ENCODE measurements at regions of chr5 and their contacts with region 1.

Region 1: DNA sequence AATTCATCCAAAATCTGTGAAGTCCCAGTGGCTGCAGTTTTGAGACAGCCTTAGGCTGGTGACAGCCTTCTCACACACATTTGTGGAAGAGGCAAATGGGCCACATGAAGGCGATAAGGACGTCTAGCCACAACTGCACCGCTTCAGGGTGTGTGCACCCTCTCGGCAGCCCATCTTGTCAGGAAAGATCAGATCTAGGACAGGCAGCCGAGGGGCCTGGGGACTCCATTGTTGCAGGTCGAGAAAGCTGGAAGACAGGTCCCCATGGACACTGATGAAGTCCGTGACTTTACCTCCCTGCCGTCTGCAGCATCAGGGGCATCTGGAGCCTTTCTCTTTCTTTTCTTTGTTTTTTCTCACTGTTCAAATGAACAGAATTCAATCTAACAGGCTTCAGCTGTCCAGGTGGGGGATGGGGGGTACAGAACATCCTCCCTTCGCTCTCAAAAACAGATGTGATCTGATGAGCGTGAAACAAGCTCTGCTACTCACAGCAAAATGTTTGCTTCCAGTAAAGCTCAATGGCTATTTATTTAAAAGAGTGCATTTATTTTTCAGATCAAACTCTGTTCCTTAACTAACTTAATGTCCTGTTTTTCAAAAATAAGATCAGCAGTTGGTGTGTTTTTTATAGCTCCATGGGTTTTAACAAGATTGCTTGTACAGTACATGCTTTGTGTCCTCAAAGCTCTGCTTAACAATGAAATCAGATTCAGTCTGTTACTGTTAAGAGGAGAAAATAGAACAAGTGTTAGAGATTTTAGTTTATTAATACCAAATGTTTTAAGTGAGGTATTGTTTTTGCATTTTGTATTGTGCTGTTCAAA is 111.8 kb upstream of the OTULINL start:
- DNase-seq: no peak
- ATAC-seq: no peak
- H3K4me3 ChIP-seq: no peak overlapping the region
- H3K27ac ChIP-seq: no peak overlapping the region
- H3K4me1 ChIP-seq: peaks cover 17% of the 10 kb centered on the region
- H3K27me3 ChIP-seq: no peaks in the 10 kb centered on the region
- CTCF ChIP-seq: no peak
- POLR2A ChIP-seq: no peak
- RAD21 ChIP-seq: no peak

Region 2: DNA sequence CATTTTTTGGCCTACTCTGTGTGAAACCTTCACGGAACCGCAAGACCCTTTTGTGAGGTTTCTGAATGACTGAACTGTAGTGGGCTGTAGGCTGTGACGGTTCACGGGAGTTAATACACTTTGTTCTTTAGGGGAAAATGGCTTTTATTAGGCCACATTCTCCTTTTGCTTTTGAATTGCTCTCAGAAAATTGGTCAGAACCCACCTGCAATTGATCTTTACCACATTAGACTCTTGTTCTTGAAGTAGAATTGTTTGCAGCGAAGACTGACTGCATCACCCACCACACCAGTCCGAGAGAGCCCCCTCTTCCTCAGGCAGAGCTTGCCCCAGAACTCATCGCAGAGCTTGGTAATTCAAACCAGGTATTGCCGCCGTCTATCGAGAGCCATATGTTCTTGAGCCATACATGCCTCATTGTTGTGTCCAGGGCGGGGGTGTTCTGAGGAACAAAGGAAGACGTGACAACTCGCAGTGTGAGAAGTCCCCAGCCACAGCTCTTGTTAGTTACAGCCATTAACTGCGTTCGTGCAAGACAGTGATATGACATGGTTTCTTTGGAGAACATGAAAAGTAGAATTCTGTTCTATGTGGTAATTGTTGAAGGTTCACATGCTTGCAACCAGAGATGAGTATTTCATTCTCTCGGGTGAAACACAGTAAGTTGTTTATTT is 54.6 kb before region 1 on chr5:
- CTCF ChIA-PET with region 1: no interaction called
- POLR2A ChIA-PET with region 1: no interaction called
- dilution Hi-C with region 1: no loop called
- in situ Hi-C with region 1: no loop called
- intact Hi-C with region 1: loop called (anchors 5 kb)
- DNase-seq: no peak
- ATAC-seq: no peak
- H3K4me3 ChIP-seq: no peak overlapping the region
- H3K27ac ChIP-seq: no peak overlapping the region; the same call in 1 of the 2 replicates
- H3K4me1 ChIP-seq: peaks cover 43% of the 10 kb centered on the region
- H3K27me3 ChIP-seq: no peaks in the 10 kb centered on the region
- CTCF ChIP-seq: no peak
- POLR2A ChIP-seq: no peak
- RAD21 ChIP-seq: no peak

Region 3: GRCh38 chr5:14627270-14627669 is 157.5 kb after region 1 on chr5:
- CTCF ChIA-PET with region 1: no interaction called
- POLR2A ChIA-PET with region 1: no interaction called
- dilution Hi-C with region 1: no loop called
- in situ Hi-C with region 1: no loop called
- intact Hi-C with region 1: no loop called
- DNase-seq: no peak
- ATAC-seq: no peak
- H3K4me3 ChIP-seq: no peak overlapping the region
- H3K27ac ChIP-seq: no peak overlapping the region
- H3K4me1 ChIP-seq: no peaks in the 10 kb centered on the region
- H3K27me3 ChIP-seq: peaks cover 4% of the 10 kb centered on the region
- CTCF ChIP-seq: no peak
- POLR2A ChIP-seq: no peak
- RAD21 ChIP-seq: no peak

Measured in IMR-90 (cell line).